ENCODE measurements at regions of chr6 and their contacts with region 1.

Region 1: DNA sequence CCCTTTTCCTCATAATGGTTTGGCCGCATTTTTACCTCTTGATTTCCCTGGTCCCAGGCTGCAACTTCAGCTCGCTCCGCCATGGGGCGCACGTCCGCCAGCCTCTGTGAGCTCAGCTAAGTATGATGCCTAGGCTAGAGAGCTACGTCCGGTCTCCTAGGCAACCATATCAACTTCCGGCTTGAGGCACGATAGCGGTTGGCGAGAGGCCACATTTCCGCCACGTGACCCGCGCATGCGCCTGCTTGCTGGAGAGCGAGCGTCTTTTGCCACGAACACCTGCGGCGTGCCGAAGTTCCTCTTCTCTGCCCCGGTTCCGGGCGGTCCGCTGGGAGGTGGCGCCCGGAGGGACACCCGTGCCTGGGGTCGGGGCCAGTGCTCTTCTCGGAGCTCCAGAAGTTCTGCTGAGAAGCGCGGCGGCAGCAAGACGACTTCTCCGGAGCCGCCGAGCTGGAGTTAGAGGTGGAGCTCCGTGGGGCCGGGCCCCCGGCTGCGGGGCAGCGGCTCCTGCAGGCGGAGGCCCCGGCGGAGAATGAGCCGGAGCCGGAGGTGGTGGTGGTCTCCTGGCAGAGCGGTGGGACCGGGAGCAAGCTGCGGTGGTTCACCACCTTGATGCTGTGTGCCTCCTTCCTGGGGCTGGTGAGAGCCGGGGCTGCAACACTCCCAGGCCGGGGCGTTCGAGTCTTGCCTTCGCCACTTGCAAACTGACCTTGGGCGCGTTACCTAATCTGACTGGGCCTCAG is 172.0 kb downstream of the SLC16A10 start:
- DNase-seq: peak; percentile 100
- H3K4me3 Mint-ChIP-seq: peak overlapping the region; percentile 84
- H3K27ac Mint-ChIP-seq: peak overlapping the region; percentile 91
- H3K4me1 Mint-ChIP-seq: peaks cover 26% of the 10 kb centered on the region
- H3K27me3 Mint-ChIP-seq: peaks cover 11% of the 10 kb centered on the region

Region 2: GRCh38 chr6:111291336-111292259 is 32.3 kb after region 1 on chr6:
- intact Hi-C with region 1: loop called (anchors 5 kb)
- DNase-seq: no peak
- H3K4me3 Mint-ChIP-seq: no peak overlapping the region
- H3K27ac Mint-ChIP-seq: no peak overlapping the region
- H3K4me1 Mint-ChIP-seq: peaks cover 31% of the 10 kb centered on the region
- H3K27me3 Mint-ChIP-seq: no peaks in the 10 kb centered on the region

Region 3: GRCh38 chr6:111478749-111479148 is 219.5 kb after region 1 on chr6:
- intact Hi-C with region 1: loop called (anchors 1 kb)
- DNase-seq: peak; percentile 68
- H3K4me3 Mint-ChIP-seq: peak overlapping the region; percentile 20
- H3K27ac Mint-ChIP-seq: peak overlapping the region; percentile 70
- H3K4me1 Mint-ChIP-seq: peaks cover 26% of the 10 kb centered on the region
- H3K27me3 Mint-ChIP-seq: no peaks in the 10 kb centered on the region

Region 4: GRCh38 chr6:111533087-111533784 is 274.0 kb after region 1 on chr6:
- intact Hi-C with region 1: loop called (anchors 1 kb)
- DNase-seq: peak; percentile 79
- H3K4me3 Mint-ChIP-seq: peak overlapping the region; percentile 2
- H3K27ac Mint-ChIP-seq: peak overlapping the region; percentile 46
- H3K4me1 Mint-ChIP-seq: peaks cover 26% of the 10 kb centered on the region
- H3K27me3 Mint-ChIP-seq: no peaks in the 10 kb centered on the region

Region 5: GRCh38 chr6:111605100-111605751 is 346.0 kb after region 1 on chr6:
- intact Hi-C with region 1: loop called (anchors 1 kb)
- DNase-seq: peak; percentile 78
- H3K4me3 Mint-ChIP-seq: peak overlapping the region; percentile 90
- H3K27ac Mint-ChIP-seq: peak overlapping the region; percentile 99
- H3K4me1 Mint-ChIP-seq: peaks cover 30% of the 10 kb centered on the region
- H3K27me3 Mint-ChIP-seq: no peaks in the 10 kb centered on the region

Region 6: GRCh38 chr6:111642463-111643158 is 383.4 kb after region 1 on chr6:
- intact Hi-C with region 1: loop called (anchors 1 kb)
- DNase-seq: peak; percentile 81
- H3K4me3 Mint-ChIP-seq: no peak overlapping the region
- H3K27ac Mint-ChIP-seq: no peak overlapping the region
- H3K4me1 Mint-ChIP-seq: no peaks in the 10 kb centered on the region
- H3K27me3 Mint-ChIP-seq: no peaks in the 10 kb centered on the region

Region 7: DNA sequence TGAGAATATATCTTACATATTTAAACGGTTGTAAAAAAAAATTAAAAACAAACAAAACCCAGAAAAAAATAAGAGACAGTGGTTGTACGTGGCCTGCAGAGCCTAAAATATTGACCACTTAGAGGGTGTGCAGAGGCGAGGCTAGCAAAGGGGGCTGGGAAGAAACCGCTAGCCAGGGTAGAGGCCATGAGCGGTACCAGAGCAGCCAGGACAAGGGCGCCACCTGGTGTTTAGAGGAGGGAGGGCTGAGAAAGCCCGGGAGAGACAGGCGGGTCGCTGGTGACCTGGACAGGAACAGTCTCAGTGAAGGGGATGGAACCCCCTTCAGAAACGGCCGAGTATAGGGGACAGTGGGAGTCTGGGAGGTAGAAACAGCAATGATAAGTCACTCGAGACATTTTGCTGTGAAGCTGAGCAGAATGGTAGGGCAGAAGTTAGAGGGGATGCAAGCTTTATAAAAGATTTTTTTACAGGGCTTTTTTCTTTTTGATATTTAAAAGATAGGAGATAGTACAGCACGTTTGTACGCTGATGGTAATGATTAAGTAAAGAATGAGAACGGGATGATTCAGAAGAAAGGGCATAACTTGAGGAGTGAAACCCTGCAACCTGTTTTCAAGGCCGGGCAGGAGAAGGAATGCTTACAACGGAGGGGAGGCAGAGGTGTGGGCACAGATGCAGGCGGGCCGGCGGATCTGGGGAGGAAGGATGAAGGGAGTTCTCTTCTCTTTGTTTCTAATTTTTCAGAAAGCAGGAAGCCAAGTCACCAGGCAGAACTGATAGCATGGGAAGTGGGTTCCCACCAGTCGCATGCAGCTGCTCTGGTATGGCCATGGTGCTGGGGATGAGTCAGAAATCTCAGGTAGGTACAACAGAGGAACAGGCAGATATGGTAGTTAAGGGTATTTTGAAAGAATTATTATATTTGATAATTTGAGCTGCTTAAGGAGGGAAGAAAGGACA is 904.3 kb after region 1 on chr6:
- intact Hi-C with region 1: loop called (anchors 10 kb)
- DNase-seq: peak; percentile 93
- H3K4me3 Mint-ChIP-seq: peak overlapping the region; percentile 45
- H3K27ac Mint-ChIP-seq: no peak overlapping the region
- H3K4me1 Mint-ChIP-seq: peaks cover 16% of the 10 kb centered on the region
- H3K27me3 Mint-ChIP-seq: peaks cover 58% of the 10 kb centered on the region